ENCODE measurements at regions of chr1 and their contacts with region 1.

Region 1: GRCh38 chr1:41925712-41926111 is 7.0 kb upstream of the HIVEP3 start:
- DNase-seq: peak; percentile 64
- ATAC-seq: peak; percentile 51
- H3K4me3 ChIP-seq: no peak overlapping the region
- H3K27ac ChIP-seq: peak overlapping the region; percentile 61
- H3K4me1 ChIP-seq: peaks cover 47% of the 10 kb centered on the region
- H3K27me3 ChIP-seq: no peaks in the 10 kb centered on the region
- CTCF ChIP-seq: no peak

Region 2: GRCh38 chr1:41955461-41956159 is 29.9 kb after region 1 on chr1:
- CTCF ChIA-PET with region 1: no interaction called
- POLR2A ChIA-PET with region 1: interaction called, 4 read pairs
- intact Hi-C with region 1: loop called (anchors 2 kb)
- DNase-seq: peak; percentile 96
- ATAC-seq: peak; percentile 82
- H3K4me3 ChIP-seq: peak overlapping the region; percentile 51; the same call in 1 of the 2 replicates
- H3K27ac ChIP-seq: peak overlapping the region; percentile 99
- H3K4me1 ChIP-seq: peaks cover 62% of the 10 kb centered on the region
- H3K27me3 ChIP-seq: no peaks in the 10 kb centered on the region
- CTCF ChIP-seq: no peak